Mammary epithelial cell (primary cell): ENCODE measurements at regions of chrX and their contacts with region 1.

Region 1: DNA sequence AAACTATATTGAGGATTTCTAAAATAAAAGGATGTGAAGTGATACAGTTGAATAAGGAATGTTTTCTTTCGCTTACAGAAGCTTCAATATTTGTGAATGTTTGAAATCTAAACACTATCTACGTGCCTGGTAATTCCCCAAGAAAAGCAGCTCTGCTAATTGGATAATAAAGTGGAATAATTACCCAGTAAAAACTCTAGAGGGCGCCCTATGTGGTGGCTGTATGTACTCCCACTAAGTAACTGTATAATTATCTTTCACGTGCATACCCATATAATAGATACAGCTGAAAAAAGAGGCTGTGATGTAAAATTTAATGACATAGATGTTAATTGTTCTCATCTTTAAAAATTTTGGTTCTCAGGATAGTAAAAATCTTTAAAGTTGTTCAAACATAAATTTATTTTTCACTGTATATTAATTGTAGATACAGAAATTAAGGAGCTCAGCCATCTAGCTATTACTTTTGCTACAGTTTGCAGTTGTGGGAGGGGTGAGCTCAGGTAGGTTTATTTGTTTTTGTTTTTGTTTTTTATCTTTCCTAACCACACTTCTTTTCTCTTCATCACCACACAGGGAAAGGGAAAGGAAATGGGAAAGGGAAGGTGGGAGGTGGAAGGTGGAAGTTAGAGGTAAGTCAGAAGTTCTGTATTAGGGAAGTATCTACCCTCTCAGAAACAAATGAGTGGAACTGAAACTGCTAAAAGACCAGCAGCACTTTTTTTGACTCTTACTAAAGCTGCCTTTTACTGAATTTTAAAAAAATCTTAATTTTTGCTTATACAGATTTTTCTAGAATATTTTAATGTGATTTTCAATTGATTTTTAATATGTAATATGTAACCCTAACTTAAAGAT is 151.7 kb upstream of the RPS6KA6 start:
- DNase-seq: peak; percentile 17
- H3K4me3 ChIP-seq: no peak overlapping the region
- H3K27ac ChIP-seq: no peak overlapping the region
- H3K4me1 ChIP-seq: no peaks in the 10 kb centered on the region
- H3K27me3 ChIP-seq: no peaks in the 10 kb centered on the region
- CTCF ChIP-seq: peak; percentile 63 to 66

Region 2: GRCh38 chrX:84175958-84176357 is 163.8 kb before region 1 on chrX:
- CTCF ChIA-PET with region 1: no interaction called
- dilution Hi-C with region 1: no loop called
- in situ Hi-C with region 1: no loop called
- intact Hi-C with region 1: no loop called
- DNase-seq: no peak
- H3K4me3 ChIP-seq: no peak overlapping the region
- H3K27ac ChIP-seq: no peak overlapping the region
- H3K4me1 ChIP-seq: no peaks in the 10 kb centered on the region
- H3K27me3 ChIP-seq: no peaks in the 10 kb centered on the region
- CTCF ChIP-seq: no peak

Region 3: GRCh38 chrX:84907324-84907968 is 567.7 kb after region 1 on chrX:
- CTCF ChIA-PET with region 1: interaction called, 3 read pairs
- dilution Hi-C with region 1: no loop called
- in situ Hi-C with region 1: no loop called
- intact Hi-C with region 1: loop called (anchors 10 kb)
- DNase-seq: peak; percentile 9
- H3K4me3 ChIP-seq: no peak overlapping the region
- H3K27ac ChIP-seq: no peak overlapping the region
- H3K4me1 ChIP-seq: no peaks in the 10 kb centered on the region
- H3K27me3 ChIP-seq: no peaks in the 10 kb centered on the region
- CTCF ChIP-seq: peak; percentile 16 to 41